Naive thymus-derived CD4-positive, alpha-beta T cell (primary cell): ENCODE measurements at regions of chr9 and their contacts with region 1.

Region 1: GRCh38 chr9:128947422-128948301 is at the starts of genes DOLK and NUP188:
- DNase-seq: peak; percentile 96 to 100 (median 98)
- ATAC-seq: peak; percentile 95
- H3K4me3 ChIP-seq: peak within 1 kb of the TSS; percentile 87
- H3K4me3 Mint-ChIP-seq: peak within 1 kb of the TSS; percentile 93 to 99 (median 98)
- H3K27ac ChIP-seq: peak within 1 kb of the TSS; percentile 97
- H3K27ac Mint-ChIP-seq: peak within 1 kb of the TSS; percentile 89 to 99 (median 97)
- H3K4me1 ChIP-seq: peaks cover 8 to 14% of the 10 kb centered on the region in 2 donors
- H3K4me1 Mint-ChIP-seq: peaks cover 16 to 49% (median 32%) of the 10 kb centered on the region in 7 donors
- H3K27me3 ChIP-seq: no peaks in the 10 kb centered on the region
- H3K27me3 Mint-ChIP-seq: no peaks in the 10 kb centered on the region
- total RNA-seq, gene DOLK: 6.0 to 12.8 (median 9.5) TPM
- total RNA-seq, gene NUP188: 55.7 to 98.7 (median 63.7) TPM

Region 2: GRCh38 chr9:128322404-128323211 is 625.1 kb before region 1 on chr9 and contains the starts of genes COQ4 and TRUB2:
- CTCF ChIA-PET with region 1: no interaction called
- POLR2A ChIA-PET with region 1: no interaction called
- intact Hi-C with region 1: loop called in 1 of 2 experiments (anchors 5 kb)
- DNase-seq: peak; percentile 80 to 95 (median 94)
- ATAC-seq: peak; percentile 95
- H3K4me3 ChIP-seq: peak within 1 kb of the TSS; percentile 98
- H3K4me3 Mint-ChIP-seq: peak within 1 kb of the TSS; percentile 82 to 99 (median 96)
- H3K27ac ChIP-seq: peak within 1 kb of the TSS; percentile 85
- H3K27ac Mint-ChIP-seq: peak within 1 kb of the TSS; percentile 95 to 99 (median 98)
- H3K4me1 ChIP-seq: peaks cover 10 to 13% of the 10 kb centered on the region in 2 donors
- H3K4me1 Mint-ChIP-seq: peaks cover 4 to 45% (median 29%) of the 10 kb centered on the region in 7 donors
- H3K27me3 ChIP-seq: no peaks in the 10 kb centered on the region
- H3K27me3 Mint-ChIP-seq: peaks cover 0 to 2% (median 0%) of the 10 kb centered on the region in 5 donors
- total RNA-seq, gene COQ4: 32.9 to 47.2 (median 42.4) TPM
- total RNA-seq, gene TRUB2: 11.5 to 27.2 (median 21.6) TPM

Region 3: DNA sequence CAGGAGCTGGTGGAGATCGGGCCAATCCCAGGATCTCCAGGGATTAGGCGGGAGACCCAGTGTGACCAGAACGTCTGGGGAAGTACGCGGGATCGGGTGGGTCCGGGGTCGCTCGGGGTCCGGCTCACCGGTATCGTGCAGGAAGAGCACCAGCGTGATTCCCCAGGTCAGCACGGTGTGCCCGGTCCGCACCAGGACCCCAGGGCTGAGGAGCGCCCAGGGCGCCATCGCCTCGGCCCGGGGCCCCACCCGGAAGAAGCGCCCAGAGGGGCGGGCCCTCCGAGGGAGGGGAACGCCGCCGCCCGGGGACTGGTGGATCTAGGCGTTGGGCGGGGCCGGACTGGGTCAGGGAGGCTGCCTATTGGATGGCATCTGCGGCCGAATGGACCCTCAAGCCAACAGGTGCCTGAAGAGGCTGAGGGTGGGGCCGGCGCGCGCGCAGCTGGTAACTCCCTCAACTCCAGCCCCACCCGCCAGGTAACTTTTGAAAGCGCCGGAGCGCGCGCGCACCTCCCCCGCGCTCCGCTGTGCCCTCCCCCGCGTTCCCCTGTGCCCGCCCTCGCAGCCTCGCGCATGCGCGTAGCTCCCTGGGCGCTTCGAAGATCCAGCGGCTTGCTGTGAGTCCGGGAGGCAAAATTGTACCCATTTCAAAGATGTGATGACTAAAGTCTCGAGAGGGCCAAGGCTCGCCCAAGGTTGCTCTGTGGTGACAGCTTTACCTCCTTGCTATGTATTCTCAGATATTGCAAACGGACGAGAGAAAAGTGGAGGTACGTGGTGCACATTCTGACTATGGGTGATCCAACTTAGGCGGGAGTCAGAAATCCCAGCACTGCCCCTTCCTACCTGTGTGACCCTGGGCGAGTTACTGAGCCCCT is 223.6 kb before region 1 on chr9 and contains the start of gene ZDHHC12:
- CTCF ChIA-PET with region 1: no interaction called
- POLR2A ChIA-PET with region 1: no interaction called
- intact Hi-C with region 1: loop called in 1 of 2 experiments (anchors 1 kb)
- DNase-seq: peak; percentile 96 to 99 (median 99)
- ATAC-seq: peak; percentile 97
- H3K4me3 ChIP-seq: peak within 1 kb of the TSS; percentile 97
- H3K4me3 Mint-ChIP-seq: peak within 1 kb of the TSS; percentile 85 to 97 (median 94)
- H3K27ac ChIP-seq: peak within 1 kb of the TSS; percentile 89
- H3K27ac Mint-ChIP-seq: peak within 1 kb of the TSS; percentile 85 to 96 (median 94)
- H3K4me1 ChIP-seq: peaks cover 13 to 29% of the 10 kb centered on the region in 2 donors
- H3K4me1 Mint-ChIP-seq: peaks cover 23 to 46% (median 39%) of the 10 kb centered on the region in 7 donors
- H3K27me3 ChIP-seq: no peaks in the 10 kb centered on the region
- H3K27me3 Mint-ChIP-seq: no peaks in the 10 kb centered on the region
- total RNA-seq, gene ZDHHC12: 21.2 to 70.3 (median 25.7) TPM

Region 4: DNA sequence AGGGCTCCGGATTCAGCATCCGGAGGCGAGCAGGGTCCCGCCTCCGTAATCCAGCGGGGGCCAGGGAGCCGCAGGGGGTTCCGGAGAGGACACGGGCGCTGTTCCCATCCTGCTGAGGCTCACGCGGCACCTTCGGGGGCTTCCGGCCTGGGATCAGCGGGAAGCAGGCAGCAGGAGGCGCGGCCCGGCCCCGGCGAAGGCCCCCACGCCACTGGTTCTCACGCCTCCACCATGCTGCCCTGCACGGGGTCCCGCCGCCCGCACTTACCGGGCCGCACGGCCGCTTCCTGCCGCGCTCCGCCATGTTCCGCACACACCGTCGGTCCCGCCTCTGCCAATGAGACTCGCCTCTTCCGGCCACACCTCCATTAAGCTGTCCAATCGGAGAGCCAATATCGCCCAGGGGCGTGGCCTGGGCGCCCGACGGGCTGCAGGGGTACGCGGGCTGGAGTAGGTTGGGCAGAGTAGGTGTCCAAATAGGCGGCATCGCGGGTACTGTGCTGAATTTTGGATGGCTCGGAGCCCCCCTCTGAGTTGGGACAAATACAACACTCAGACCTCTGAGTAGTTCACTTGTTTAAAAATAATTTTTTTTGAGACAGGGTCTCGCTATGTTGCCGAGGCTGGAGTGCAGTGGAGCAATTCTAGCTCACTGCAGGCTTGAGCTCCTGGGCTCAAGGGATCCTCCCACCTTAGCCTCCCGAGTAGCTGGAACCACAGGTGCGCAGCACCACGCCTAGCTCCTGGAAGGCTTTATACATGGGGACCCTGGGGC is 118.0 kb before region 1 on chr9 and contains the start of gene SPOUT1:
- CTCF ChIA-PET with region 1: interaction called, 4 read pairs
- POLR2A ChIA-PET with region 1: no interaction called
- intact Hi-C with region 1: loop called in 1 of 2 experiments (anchors 1 kb)
- DNase-seq: peak; percentile 86 to 95 (median 92)
- ATAC-seq: peak; percentile 100
- H3K4me3 ChIP-seq: peak within 1 kb of the TSS; percentile 91
- H3K4me3 Mint-ChIP-seq: peak within 1 kb of the TSS; percentile 92 to 99 (median 95)
- H3K27ac ChIP-seq: peak within 1 kb of the TSS; percentile 81
- H3K27ac Mint-ChIP-seq: peak within 1 kb of the TSS; percentile 91 to 97 (median 94)
- H3K4me1 ChIP-seq: peaks cover 8 to 15% of the 10 kb centered on the region in 2 donors
- H3K4me1 Mint-ChIP-seq: peaks cover 14 to 26% (median 19%) of the 10 kb centered on the region in 7 donors
- H3K27me3 ChIP-seq: no peaks in the 10 kb centered on the region
- H3K27me3 Mint-ChIP-seq: no peaks in the 10 kb centered on the region
- total RNA-seq, gene SPOUT1: 38.9 to 83.6 (median 65.2) TPM

Region 5: GRCh38 chr9:129028192-129028957 is 80.7 kb after region 1 on chr9 and contains the start of gene SH3GLB2:
- CTCF ChIA-PET with region 1: no interaction called
- POLR2A ChIA-PET with region 1: no interaction called
- intact Hi-C with region 1: loop called in 1 of 2 experiments (anchors 5 kb)
- DNase-seq: peak in 8 of 9 donors; percentile 81 to 97 (median 88)
- ATAC-seq: peak; percentile 94
- H3K4me3 ChIP-seq: peak within 1 kb of the TSS; percentile 76
- H3K4me3 Mint-ChIP-seq: peak within 1 kb of the TSS; percentile 81 to 92 (median 83)
- H3K27ac ChIP-seq: peak within 1 kb of the TSS; percentile 72
- H3K27ac Mint-ChIP-seq: peak within 1 kb of the TSS; percentile 62 to 90 (median 78)
- H3K4me1 ChIP-seq: peaks cover 13 to 18% of the 10 kb centered on the region in 2 donors
- H3K4me1 Mint-ChIP-seq: peaks cover 13 to 37% (median 25%) of the 10 kb centered on the region in 7 donors
- H3K27me3 ChIP-seq: no peaks in the 10 kb centered on the region
- H3K27me3 Mint-ChIP-seq: no peaks in the 10 kb centered on the region
- total RNA-seq, gene SH3GLB2: 76.3 to 106 (median 86.2) TPM

Region 6: GRCh38 chr9:129110740-129111527 is 163.3 kb after region 1 on chr9 and contains the starts of genes CRAT and PTPA:
- CTCF ChIA-PET with region 1: no interaction called
- POLR2A ChIA-PET with region 1: no interaction called
- intact Hi-C with region 1: loop called in 1 of 2 experiments (anchors 1 kb)
- DNase-seq: peak; percentile 85 to 96 (median 89)
- ATAC-seq: peak; percentile 93
- H3K4me3 ChIP-seq: peak within 1 kb of the TSS; percentile 82
- H3K4me3 Mint-ChIP-seq: peak within 1 kb of the TSS; percentile 88 to 97 (median 92)
- H3K27ac ChIP-seq: peak within 1 kb of the TSS; percentile 87
- H3K27ac Mint-ChIP-seq: peak within 1 kb of the TSS; percentile 83 to 97 (median 94)
- H3K4me1 ChIP-seq: peaks cover 10% of the 10 kb centered on the region in 2 donors
- H3K4me1 Mint-ChIP-seq: peaks cover 26 to 45% (median 29%) of the 10 kb centered on the region in 7 donors
- H3K27me3 ChIP-seq: no peaks in the 10 kb centered on the region
- H3K27me3 Mint-ChIP-seq: no peaks in the 10 kb centered on the region
- total RNA-seq, gene CRAT: 7.2 to 15.6 (median 11.4) TPM
- total RNA-seq, gene PTPA: 45.0 to 110 (median 52.3) TPM